Sigmoid colon (tissue), 7 donors: ENCODE measurements at regions of chr6 and their contacts with region 1.

Region 1: GRCh38 chr6:32838114-32838958 is at the start of gene TAP2:
- DNase-seq: peak; percentile 97
- H3K4me3 ChIP-seq: peak within 1 kb of the TSS; percentile 56 to 81 (median 64)
- H3K27ac ChIP-seq: peak within 1 kb of the TSS; percentile 84 to 97 (median 90)
- H3K4me1 ChIP-seq: peaks cover 0 to 26% (median 22%) of the 10 kb centered on the region in 4 donors
- H3K27me3 ChIP-seq: no peaks in the 10 kb centered on the region
- CTCF ChIP-seq: peak; percentile 90 to 96 (median 94)
- EP300 ChIP-seq: no peak
- POLR2A ChIP-seq: peak in 1 of 2 donors; percentile 25
- total RNA-seq, gene TAP2: 5.9 to 9.2 (median 7.2) TPM

Region 2: GRCh38 chr6:32627831-32628230 is 210.5 kb before region 1 on chr6:
- intact Hi-C with region 1: no loop called
- DNase-seq: no peak
- H3K4me3 ChIP-seq: no peak overlapping the region
- H3K27ac ChIP-seq: peak overlapping the region in 1 of 4 donors; percentile 20
- H3K4me1 ChIP-seq: no peaks in the 10 kb centered on the region
- H3K27me3 ChIP-seq: no peaks in the 10 kb centered on the region
- CTCF ChIP-seq: no peak
- EP300 ChIP-seq: no peak
- POLR2A ChIP-seq: no peak

Region 3: DNA sequence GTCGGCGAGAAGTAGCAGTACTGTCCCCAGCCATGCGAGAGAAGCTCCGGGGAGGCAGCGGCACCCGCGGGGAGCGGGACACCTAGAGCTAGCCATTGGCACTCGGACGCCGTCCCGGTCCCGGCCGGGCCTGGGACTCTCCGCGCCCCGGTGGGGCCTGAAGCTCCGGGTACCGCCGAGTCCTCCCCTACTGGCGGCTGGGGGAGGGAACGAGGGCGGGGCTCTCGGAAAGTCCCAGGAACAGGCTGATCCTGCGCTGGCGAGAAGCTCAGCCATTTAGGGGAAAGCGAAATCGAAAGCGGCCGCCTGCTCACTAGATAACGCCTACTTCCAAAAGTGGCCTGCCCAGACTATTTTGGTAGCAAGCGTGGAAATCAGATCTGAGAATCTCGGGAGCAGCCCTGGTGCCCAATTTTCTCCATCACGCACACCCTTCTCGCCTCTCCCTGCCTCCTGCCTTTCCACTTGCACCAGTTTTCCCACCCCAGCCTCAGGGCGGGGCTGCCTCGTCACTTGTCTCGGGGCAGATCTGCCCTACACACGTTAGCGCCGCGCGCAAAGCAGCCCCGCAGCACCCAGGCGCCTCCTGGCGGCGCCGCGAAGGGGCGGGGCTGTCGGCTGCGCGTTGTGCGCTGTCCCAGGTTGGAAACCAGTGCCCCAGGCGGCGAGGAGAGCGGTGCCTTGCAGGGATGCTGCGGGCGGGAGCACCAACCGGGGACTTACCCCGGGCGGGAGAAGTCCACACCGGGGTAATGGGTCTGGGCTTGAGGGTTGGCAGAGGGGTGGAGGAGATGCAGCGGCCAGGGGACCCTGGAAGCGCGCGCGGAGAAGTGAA is 15.4 kb after region 1 on chr6 and contains the starts of genes PSMB9 and TAP1:
- intact Hi-C with region 1: loop called (anchors 1 kb)
- DNase-seq: peak; percentile 99
- H3K4me3 ChIP-seq: peak within 1 kb of the TSS; percentile 80 to 90 (median 82)
- H3K27ac ChIP-seq: peak within 1 kb of the TSS; percentile 96 to 99 (median 98)
- H3K4me1 ChIP-seq: peaks cover 0 to 35% (median 26%) of the 10 kb centered on the region in 4 donors
- H3K27me3 ChIP-seq: no peaks in the 10 kb centered on the region
- CTCF ChIP-seq: peak; percentile 71 to 89 (median 82)
- EP300 ChIP-seq: peak in 2 of 4 donors; percentile 53 to 69
- POLR2A ChIP-seq: peak; percentile 97 to 98
- total RNA-seq, gene PSMB9: 10.2 to 23.2 (median 13.8) TPM
- total RNA-seq, gene TAP1: 22.5 to 35.0 (median 24.6) TPM

Region 4: GRCh38 chr6:32868257-32868788 is 30.0 kb after region 1 on chr6:
- intact Hi-C with region 1: loop called (anchors 1 kb)
- DNase-seq: peak; percentile 87
- H3K4me3 ChIP-seq: no peak overlapping the region
- H3K27ac ChIP-seq: no peak overlapping the region
- H3K4me1 ChIP-seq: no peaks in the 10 kb centered on the region
- H3K27me3 ChIP-seq: no peaks in the 10 kb centered on the region
- CTCF ChIP-seq: peak; percentile 77 to 95 (median 90)
- EP300 ChIP-seq: no peak
- POLR2A ChIP-seq: no peak